IMR-90 (cell line): ENCODE measurements at regions of chr11 and their contacts with region 1.

Region 1: GRCh38 chr11:59247531-59248227 is 35.0 kb upstream of the MPEG1 start:
- DNase-seq: peak; percentile 7
- ATAC-seq: peak; percentile 58
- H3K4me3 ChIP-seq: no peak overlapping the region
- H3K27ac ChIP-seq: no peak overlapping the region
- H3K4me1 ChIP-seq: peaks cover 2% of the 10 kb centered on the region; the same call in 1 of the 2 replicates
- H3K27me3 ChIP-seq: no peaks in the 10 kb centered on the region; the same call in 1 of the 2 replicates
- CTCF ChIP-seq: no peak
- POLR2A ChIP-seq: no peak
- RAD21 ChIP-seq: no peak

Region 2: DNA sequence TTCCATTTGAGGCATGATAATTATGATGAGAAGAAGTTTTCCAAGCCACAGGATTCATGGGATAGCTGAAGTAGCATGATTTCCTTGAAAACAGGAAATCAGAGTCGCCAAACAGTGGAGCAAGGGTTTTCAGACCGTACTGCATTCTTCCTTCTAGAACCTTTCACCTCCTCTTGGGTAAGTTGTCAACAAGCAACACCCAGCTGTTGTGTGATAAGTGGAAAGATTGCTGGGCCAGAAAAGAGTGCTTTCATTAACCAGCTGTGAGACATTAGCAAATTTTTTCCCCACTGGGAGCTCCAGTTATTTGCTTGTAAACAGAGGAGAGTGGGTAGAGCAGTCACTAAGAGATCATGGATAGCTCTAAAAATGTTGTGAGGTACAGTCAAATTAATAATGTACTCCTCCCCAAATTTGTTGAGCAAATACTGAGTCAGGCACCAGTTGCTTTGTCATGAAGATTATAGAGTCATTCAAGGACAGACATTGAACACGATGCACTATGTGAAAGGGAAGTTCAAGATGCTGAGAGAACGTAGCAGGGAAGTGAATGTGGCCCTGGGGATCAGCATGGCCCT is 23.2 kb before region 1 on chr11:
- CTCF ChIA-PET with region 1: interaction called, 3 read pairs
- POLR2A ChIA-PET with region 1: no interaction called
- dilution Hi-C with region 1: no loop called
- in situ Hi-C with region 1: no loop called
- intact Hi-C with region 1: loop called (anchors 2 kb)
- DNase-seq: no peak
- ATAC-seq: peak; percentile 6
- H3K4me3 ChIP-seq: no peak overlapping the region
- H3K27ac ChIP-seq: peak overlapping the region; percentile 80; the same call in 1 of the 2 replicates
- H3K4me1 ChIP-seq: peaks cover 24% of the 10 kb centered on the region
- H3K27me3 ChIP-seq: no peaks in the 10 kb centered on the region
- CTCF ChIP-seq: no peak
- POLR2A ChIP-seq: no peak
- RAD21 ChIP-seq: no peak

Region 3: GRCh38 chr11:59267196-59267595 is 19.5 kb after region 1 on chr11:
- CTCF ChIA-PET with region 1: no interaction called
- POLR2A ChIA-PET with region 1: no interaction called
- dilution Hi-C with region 1: no loop called
- in situ Hi-C with region 1: no loop called
- intact Hi-C with region 1: loop called (anchors 1 kb)
- DNase-seq: no peak
- ATAC-seq: no peak
- H3K4me3 ChIP-seq: no peak overlapping the region
- H3K27ac ChIP-seq: no peak overlapping the region
- H3K4me1 ChIP-seq: no peaks in the 10 kb centered on the region
- H3K27me3 ChIP-seq: peaks cover 11% of the 10 kb centered on the region
- CTCF ChIP-seq: no peak
- POLR2A ChIP-seq: no peak
- RAD21 ChIP-seq: no peak